ENCODE measurements at regions of chr3 and their contacts with region 1.

Region 1: DNA sequence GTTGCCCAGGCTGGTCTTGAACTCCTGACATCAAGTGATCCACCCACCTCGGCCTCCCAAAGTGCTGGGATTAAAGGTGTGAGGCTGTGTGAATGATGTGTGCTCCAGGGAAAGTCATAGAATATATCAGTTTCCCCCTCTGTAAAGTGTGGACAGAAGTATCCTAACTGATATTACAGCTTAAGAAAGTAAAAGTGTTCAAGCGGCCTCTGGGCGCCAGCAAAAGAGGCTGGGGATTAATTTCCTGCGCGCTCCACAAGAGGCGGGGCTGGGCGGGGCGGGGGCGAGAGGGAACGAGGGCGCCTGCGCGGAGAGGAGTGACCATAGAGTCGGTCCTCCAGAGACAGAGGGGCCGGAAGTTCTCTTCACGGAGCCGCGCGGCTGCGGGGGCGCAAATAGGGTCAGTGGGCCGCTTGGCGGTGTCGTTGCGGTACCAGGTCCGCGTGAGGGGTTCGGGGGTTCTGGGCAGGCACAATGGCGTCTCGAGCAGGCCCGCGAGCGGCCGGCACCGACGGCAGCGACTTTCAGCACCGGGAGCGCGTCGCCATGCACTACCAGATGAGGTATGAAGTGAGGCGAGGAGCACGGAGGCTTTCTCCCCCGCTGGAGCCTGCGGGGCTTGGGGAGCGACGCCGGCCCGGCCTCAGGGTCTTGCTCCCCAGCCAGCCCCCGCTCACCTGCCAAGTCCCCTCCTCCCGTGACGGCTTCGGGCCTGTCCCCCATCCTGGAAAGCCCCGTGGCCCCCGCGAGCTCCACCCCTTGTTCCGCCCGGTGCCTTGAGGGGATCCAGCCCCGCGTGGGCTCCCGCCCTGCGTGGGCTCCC is at the start of gene JAGN1:
- DNase-seq: peak; percentile 84 to 96 (median 91)
- ATAC-seq: peak; percentile 91
- H3K4me3 ChIP-seq: peak within 1 kb of the TSS; percentile 95
- H3K4me3 Mint-ChIP-seq: peak within 1 kb of the TSS; percentile 99
- H3K27ac ChIP-seq: peak within 1 kb of the TSS; percentile 99 to 100
- H3K27ac Mint-ChIP-seq: peak within 1 kb of the TSS; percentile 95
- H3K4me1 ChIP-seq: peaks cover 20% of the 10 kb centered on the region
- H3K4me1 Mint-ChIP-seq: peaks cover 49% of the 10 kb centered on the region
- H3K27me3 ChIP-seq: no peaks in the 10 kb centered on the region
- H3K27me3 Mint-ChIP-seq: no peaks in the 10 kb centered on the region
- CTCF ChIP-seq: no peak
- total RNA-seq, gene JAGN1: 14.4 to 15.1 TPM

Region 2: DNA sequence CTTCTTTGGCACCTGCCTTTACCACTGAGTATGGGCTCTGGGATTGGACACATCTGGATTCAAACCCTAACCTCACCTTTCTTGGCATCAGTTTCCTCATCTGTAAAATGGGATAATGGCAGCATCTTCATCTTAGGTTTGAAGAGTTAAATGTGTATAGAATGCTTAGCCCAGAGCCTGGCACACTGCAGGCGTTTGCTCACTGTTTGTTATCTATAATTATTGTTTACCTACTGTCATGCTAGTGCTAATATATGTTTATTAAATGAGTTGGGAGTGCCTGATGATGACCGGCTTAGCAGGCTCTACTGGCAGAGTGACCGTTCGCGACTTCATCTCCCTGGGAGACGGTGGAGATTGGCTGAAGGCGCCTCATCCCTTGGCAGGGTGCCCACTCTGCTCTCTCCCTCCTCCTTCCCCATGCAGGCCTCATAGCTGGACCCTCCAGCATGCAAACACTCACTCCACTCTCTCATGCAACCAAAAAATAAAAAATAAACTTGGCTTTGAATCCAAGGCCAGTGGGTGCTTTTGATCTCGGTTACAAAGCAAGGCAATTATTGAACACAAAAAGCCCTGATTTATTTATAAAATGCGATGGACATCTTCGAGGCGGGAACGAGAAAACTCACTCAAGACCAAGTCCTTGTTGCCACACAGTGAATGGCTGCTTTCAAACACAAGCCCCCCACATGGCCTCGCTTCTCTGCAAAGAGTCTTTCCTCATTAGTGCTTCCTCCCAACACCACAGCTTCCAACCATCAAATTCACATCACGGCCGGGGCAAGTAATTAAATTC is 791.7 kb before region 1 on chr3:
- CTCF ChIA-PET with region 1: no interaction called
- POLR2A ChIA-PET with region 1: no interaction called
- intact Hi-C with region 1: no loop called
- DNase-seq: no peak
- ATAC-seq: no peak
- H3K4me3 ChIP-seq: no peak overlapping the region
- H3K4me3 Mint-ChIP-seq: no peak overlapping the region
- H3K27ac ChIP-seq: no peak overlapping the region
- H3K27ac Mint-ChIP-seq: no peak overlapping the region
- H3K4me1 ChIP-seq: no peaks in the 10 kb centered on the region
- H3K4me1 Mint-ChIP-seq: no peaks in the 10 kb centered on the region
- H3K27me3 ChIP-seq: no peaks in the 10 kb centered on the region
- H3K27me3 Mint-ChIP-seq: no peaks in the 10 kb centered on the region
- CTCF ChIP-seq: no peak

Region 3: GRCh38 chr3:9214599-9214998 is 675.9 kb before region 1 on chr3:
- CTCF ChIA-PET with region 1: no interaction called
- POLR2A ChIA-PET with region 1: no interaction called
- intact Hi-C with region 1: no loop called
- DNase-seq: no peak
- ATAC-seq: no peak
- H3K4me3 ChIP-seq: no peak overlapping the region
- H3K4me3 Mint-ChIP-seq: no peak overlapping the region
- H3K27ac ChIP-seq: no peak overlapping the region
- H3K27ac Mint-ChIP-seq: no peak overlapping the region
- H3K4me1 ChIP-seq: no peaks in the 10 kb centered on the region
- H3K4me1 Mint-ChIP-seq: no peaks in the 10 kb centered on the region
- H3K27me3 ChIP-seq: no peaks in the 10 kb centered on the region
- H3K27me3 Mint-ChIP-seq: no peaks in the 10 kb centered on the region
- CTCF ChIP-seq: no peak

Region 4: GRCh38 chr3:9649791-9650521 is 240.5 kb before region 1 on chr3:
- CTCF ChIA-PET with region 1: no interaction called
- POLR2A ChIA-PET with region 1: interaction called, 6 read pairs
- intact Hi-C with region 1: loop called in 1 of 2 experiments (anchors 2 kb)
- DNase-seq: peak in 3 of 14 experiments; percentile 40 to 57 (median 53)
- ATAC-seq: no peak
- H3K4me3 ChIP-seq: peak overlapping the region; percentile 92
- H3K4me3 Mint-ChIP-seq: peak overlapping the region; percentile 96
- H3K27ac ChIP-seq: peak overlapping the region; percentile 78 to 92
- H3K27ac Mint-ChIP-seq: peak overlapping the region; percentile 87
- H3K4me1 ChIP-seq: peaks cover 36% of the 10 kb centered on the region
- H3K4me1 Mint-ChIP-seq: peaks cover 35% of the 10 kb centered on the region
- H3K27me3 ChIP-seq: no peaks in the 10 kb centered on the region
- H3K27me3 Mint-ChIP-seq: no peaks in the 10 kb centered on the region
- CTCF ChIP-seq: no peak

Region 5: GRCh38 chr3:9792405-9793160 is 97.9 kb before region 1 on chr3 and contains the starts of genes ARPC4 and TADA3:
- CTCF ChIA-PET with region 1: no interaction called
- POLR2A ChIA-PET with region 1: interaction called, 26 read pairs
- intact Hi-C with region 1: loop called in 1 of 2 experiments (anchors 2 kb)
- DNase-seq: peak; percentile 82 to 96 (median 88)
- ATAC-seq: peak; percentile 85
- H3K4me3 ChIP-seq: peak within 1 kb of the TSS; percentile 99
- H3K4me3 Mint-ChIP-seq: peak within 1 kb of the TSS; percentile 99
- H3K27ac ChIP-seq: peak within 1 kb of the TSS; percentile 95 to 98
- H3K27ac Mint-ChIP-seq: peak within 1 kb of the TSS; percentile 99
- H3K4me1 ChIP-seq: peaks cover 64% of the 10 kb centered on the region
- H3K4me1 Mint-ChIP-seq: peaks cover 76% of the 10 kb centered on the region
- H3K27me3 ChIP-seq: no peaks in the 10 kb centered on the region
- H3K27me3 Mint-ChIP-seq: no peaks in the 10 kb centered on the region
- CTCF ChIP-seq: no peak
- total RNA-seq, gene ARPC4: 88.7 to 91.3 TPM
- total RNA-seq, gene TADA3: 14.7 to 16.5 TPM

Region 6: GRCh38 chr3:9902372-9903237 is 12.1 kb after region 1 on chr3 and contains the start of gene IL17RE:
- CTCF ChIA-PET with region 1: interaction called, 3 read pairs
- POLR2A ChIA-PET with region 1: interaction called, 30 read pairs
- intact Hi-C with region 1: no loop called
- DNase-seq: peak in 4 of 14 experiments; percentile 9 to 46 (median 22)
- ATAC-seq: peak; percentile 60
- H3K4me3 ChIP-seq: peak within 1 kb of the TSS; percentile 28
- H3K4me3 Mint-ChIP-seq: peak within 1 kb of the TSS; percentile 68
- H3K27ac ChIP-seq: peak within 1 kb of the TSS in 1 of 2 donors; percentile 40
- H3K27ac Mint-ChIP-seq: peak within 1 kb of the TSS; percentile 63
- H3K4me1 ChIP-seq: peaks cover 25% of the 10 kb centered on the region
- H3K4me1 Mint-ChIP-seq: peaks cover 27% of the 10 kb centered on the region
- H3K27me3 ChIP-seq: no peaks in the 10 kb centered on the region
- H3K27me3 Mint-ChIP-seq: no peaks in the 10 kb centered on the region
- CTCF ChIP-seq: no peak
- total RNA-seq, gene IL17RE: 1.4 to 1.6 TPM

Region 7: GRCh38 chr3:9946112-9947024 is 55.9 kb after region 1 on chr3:
- CTCF ChIA-PET with region 1: interaction called, 3 read pairs
- POLR2A ChIA-PET with region 1: interaction called, 10 read pairs
- intact Hi-C with region 1: loop called in 1 of 2 experiments (anchors 5 kb)
- DNase-seq: peak; percentile 65 to 91 (median 78)
- ATAC-seq: peak; percentile 93
- H3K4me3 ChIP-seq: peak overlapping the region; percentile 59
- H3K4me3 Mint-ChIP-seq: peak overlapping the region; percentile 62
- H3K27ac ChIP-seq: peak overlapping the region; percentile 47 to 55
- H3K27ac Mint-ChIP-seq: peak overlapping the region; percentile 70
- H3K4me1 ChIP-seq: peaks cover 16% of the 10 kb centered on the region
- H3K4me1 Mint-ChIP-seq: peaks cover 7% of the 10 kb centered on the region
- H3K27me3 ChIP-seq: no peaks in the 10 kb centered on the region
- H3K27me3 Mint-ChIP-seq: no peaks in the 10 kb centered on the region
- CTCF ChIP-seq: peak; percentile 34

Region 8: GRCh38 chr3:9986237-9986725 is 95.8 kb after region 1 on chr3:
- CTCF ChIA-PET with region 1: interaction called, 3 read pairs
- POLR2A ChIA-PET with region 1: interaction called, 13 read pairs
- intact Hi-C with region 1: no loop called
- DNase-seq: no peak
- ATAC-seq: peak; percentile 44
- H3K4me3 ChIP-seq: peak overlapping the region; percentile 99
- H3K4me3 Mint-ChIP-seq: peak overlapping the region; percentile 96
- H3K27ac ChIP-seq: peak overlapping the region; percentile 75 to 94
- H3K27ac Mint-ChIP-seq: peak overlapping the region; percentile 98
- H3K4me1 ChIP-seq: peaks cover 27% of the 10 kb centered on the region
- H3K4me1 Mint-ChIP-seq: peaks cover 27% of the 10 kb centered on the region
- H3K27me3 ChIP-seq: no peaks in the 10 kb centered on the region
- H3K27me3 Mint-ChIP-seq: no peaks in the 10 kb centered on the region
- CTCF ChIP-seq: no peak

Region 9: DNA sequence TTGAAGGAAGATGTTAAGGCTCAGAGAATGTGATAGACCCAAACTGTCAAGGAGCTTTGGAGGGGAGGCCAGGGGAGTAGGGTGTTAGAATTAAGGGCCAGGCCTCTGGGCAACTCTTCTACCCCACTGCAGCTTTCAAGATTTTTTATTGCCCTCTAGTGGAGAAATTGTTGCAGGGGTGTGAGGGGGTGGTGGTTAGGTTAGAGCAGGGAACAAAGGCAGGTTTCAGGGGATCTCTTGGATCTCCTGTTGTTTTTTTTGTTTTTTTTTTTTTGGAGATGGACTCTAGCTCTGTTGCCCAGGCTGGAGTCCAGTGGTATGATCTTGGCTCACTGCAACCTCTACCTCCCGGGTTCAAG is 431.9 kb after region 1 on chr3:
- CTCF ChIA-PET with region 1: interaction called, 4 read pairs
- POLR2A ChIA-PET with region 1: interaction called, 8 read pairs
- intact Hi-C with region 1: loop called in 1 of 2 experiments (anchors 2 kb)
- DNase-seq: peak in 3 of 14 experiments; percentile 32 to 53 (median 47)
- ATAC-seq: no peak
- H3K4me3 ChIP-seq: no peak overlapping the region
- H3K4me3 Mint-ChIP-seq: peak overlapping the region; percentile 87
- H3K27ac ChIP-seq: no peak overlapping the region
- H3K27ac Mint-ChIP-seq: peak overlapping the region; percentile 91
- H3K4me1 ChIP-seq: peaks cover 32% of the 10 kb centered on the region
- H3K4me1 Mint-ChIP-seq: peaks cover 32% of the 10 kb centered on the region
- H3K27me3 ChIP-seq: peaks cover 0 to 3% of the 10 kb centered on the region in 2 experiments
- H3K27me3 Mint-ChIP-seq: peaks cover 6% of the 10 kb centered on the region
- CTCF ChIP-seq: peak; percentile 34

Measured in CD4-positive, alpha-beta T cell (primary cell).